Activated T-helper 1 cell treated with anti-CD3 and anti-CD28 coated beads, Interleukin-12 subunit alpha, Interleukin-12 subunit beta, Interleukin-2, Interleukin-4 antibody, amounts not matched to agents 30 ng/mL and 10 ng/mL and 1 ng/mL, durations not matched to agents 14 hours and 24 hours and 36 hours (primary cell): ENCODE measurements at regions of chr3 and their contacts with region 1.

Region 1: GRCh38 chr3:67654099-67654843 is at the start of gene SUCLG2:
- DNase-seq: peak; percentile 78
- H3K4me3 Mint-ChIP-seq: peak within 1 kb of the TSS; percentile 82
- H3K27ac Mint-ChIP-seq: peak within 1 kb of the TSS; percentile 85
- H3K4me1 Mint-ChIP-seq: peaks cover 59% of the 10 kb centered on the region
- H3K27me3 Mint-ChIP-seq: no peaks in the 10 kb centered on the region
- total RNA-seq, gene SUCLG2: 30.3 and 31.0 TPM in 2 replicates

Region 2: DNA sequence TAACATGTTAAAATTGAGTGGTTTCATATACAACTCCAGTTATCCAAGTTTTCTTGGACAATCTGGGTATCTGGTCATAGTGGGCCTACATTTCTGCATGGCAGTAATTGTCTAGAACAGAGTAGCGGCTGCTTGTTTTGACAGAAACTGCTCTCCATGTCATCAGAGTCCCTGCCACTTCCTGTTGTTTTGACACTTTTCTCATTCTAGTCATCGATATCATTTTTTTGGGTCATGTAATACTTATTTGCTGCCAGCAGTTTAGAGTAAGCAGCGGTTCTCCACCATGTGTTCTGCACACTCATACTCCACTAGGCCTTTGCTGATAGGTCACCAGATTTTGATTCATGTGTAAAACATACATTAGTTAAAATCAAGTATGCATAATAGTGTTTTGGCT is 1352.0 kb before region 1 on chr3:
- intact Hi-C with region 1: loop called (anchors 5 kb)
- DNase-seq: peak; percentile 37
- H3K4me3 Mint-ChIP-seq: peak overlapping the region; percentile 32
- H3K27ac Mint-ChIP-seq: peak overlapping the region; percentile 91
- H3K4me1 Mint-ChIP-seq: peaks cover 65% of the 10 kb centered on the region
- H3K27me3 Mint-ChIP-seq: no peaks in the 10 kb centered on the region

Region 3: DNA sequence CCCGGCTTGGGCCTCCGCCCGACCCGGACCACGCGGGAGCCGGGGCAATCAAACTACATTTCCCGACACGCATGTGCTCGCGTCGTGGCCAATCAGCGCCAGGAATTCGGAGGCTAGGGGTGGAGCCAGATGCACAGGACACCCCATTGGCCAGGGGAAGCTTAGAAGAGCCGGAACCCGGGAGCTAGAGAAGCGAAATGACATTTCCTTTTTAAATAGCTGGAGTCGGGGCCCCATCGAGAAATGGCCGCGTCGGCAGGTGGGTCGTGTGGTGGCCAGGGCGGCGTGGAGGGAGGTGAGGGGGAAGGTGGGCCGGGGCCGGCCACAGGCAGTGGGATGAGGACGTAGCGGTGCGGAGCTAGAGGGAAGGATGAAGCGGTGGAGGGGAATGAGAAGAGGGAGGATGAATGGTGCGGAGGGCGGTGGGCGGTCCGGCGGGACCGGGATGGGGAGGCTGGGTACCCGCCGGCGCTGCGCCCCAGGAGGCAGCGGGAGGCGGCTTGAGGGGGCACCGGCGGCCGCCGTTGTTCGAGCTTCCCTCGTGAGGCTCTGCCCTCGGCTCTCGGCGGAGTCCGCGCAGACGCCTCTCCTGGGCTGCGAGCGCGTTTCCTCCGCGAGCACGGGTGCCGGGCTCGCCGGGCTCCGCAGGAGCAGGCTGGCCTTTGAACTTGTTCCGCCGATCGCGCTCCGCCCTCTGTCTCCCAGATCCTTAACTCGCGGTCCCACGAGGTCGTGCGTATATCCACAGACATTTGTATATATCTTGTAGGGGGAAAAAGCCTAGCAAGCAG is 656.0 kb before region 1 on chr3 and contains the start of gene KBTBD8:
- intact Hi-C with region 1: loop called (anchors 1 kb)
- DNase-seq: peak; percentile 97
- H3K4me3 Mint-ChIP-seq: peak within 1 kb of the TSS; percentile 95
- H3K27ac Mint-ChIP-seq: peak within 1 kb of the TSS; percentile 88
- H3K4me1 Mint-ChIP-seq: peaks cover 36% of the 10 kb centered on the region
- H3K27me3 Mint-ChIP-seq: peaks cover 10% of the 10 kb centered on the region
- total RNA-seq, gene KBTBD8: 18.3 and 26.6 TPM in 2 replicates

Region 4: DNA sequence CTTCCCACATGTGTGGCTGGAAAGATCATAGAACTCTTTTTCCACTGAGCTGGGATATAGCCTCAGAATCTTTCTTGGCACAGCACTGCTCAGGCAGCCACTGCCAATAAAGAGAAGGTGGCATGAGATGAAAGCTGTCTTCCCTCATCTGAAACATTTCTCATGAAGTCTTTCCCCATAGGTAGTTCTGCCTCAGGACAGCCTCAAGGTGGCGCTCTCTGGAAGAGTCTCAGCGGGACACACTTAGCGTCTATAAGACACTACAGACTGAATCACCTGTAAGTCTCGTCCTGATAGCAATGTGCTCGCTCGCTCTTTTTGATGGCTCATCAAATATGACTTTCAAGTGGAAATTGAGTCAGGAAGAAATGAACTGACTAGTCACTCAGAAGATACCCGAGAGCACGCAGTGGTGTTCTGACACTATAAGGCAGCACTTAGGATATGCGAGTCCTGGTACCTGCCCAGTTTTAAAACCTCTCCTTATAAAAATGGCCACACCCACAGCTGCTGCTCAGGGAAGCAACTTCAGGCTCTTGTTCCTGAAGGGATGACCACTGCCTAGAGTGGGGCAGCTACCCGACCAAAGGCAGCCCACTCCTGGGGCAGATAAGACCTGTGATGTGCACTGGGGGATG is 269.4 kb before region 1 on chr3:
- intact Hi-C with region 1: loop called (anchors 2 kb)
- DNase-seq: no peak
- H3K4me3 Mint-ChIP-seq: no peak overlapping the region
- H3K27ac Mint-ChIP-seq: no peak overlapping the region
- H3K4me1 Mint-ChIP-seq: peaks cover 25% of the 10 kb centered on the region
- H3K27me3 Mint-ChIP-seq: no peaks in the 10 kb centered on the region

Region 5: DNA sequence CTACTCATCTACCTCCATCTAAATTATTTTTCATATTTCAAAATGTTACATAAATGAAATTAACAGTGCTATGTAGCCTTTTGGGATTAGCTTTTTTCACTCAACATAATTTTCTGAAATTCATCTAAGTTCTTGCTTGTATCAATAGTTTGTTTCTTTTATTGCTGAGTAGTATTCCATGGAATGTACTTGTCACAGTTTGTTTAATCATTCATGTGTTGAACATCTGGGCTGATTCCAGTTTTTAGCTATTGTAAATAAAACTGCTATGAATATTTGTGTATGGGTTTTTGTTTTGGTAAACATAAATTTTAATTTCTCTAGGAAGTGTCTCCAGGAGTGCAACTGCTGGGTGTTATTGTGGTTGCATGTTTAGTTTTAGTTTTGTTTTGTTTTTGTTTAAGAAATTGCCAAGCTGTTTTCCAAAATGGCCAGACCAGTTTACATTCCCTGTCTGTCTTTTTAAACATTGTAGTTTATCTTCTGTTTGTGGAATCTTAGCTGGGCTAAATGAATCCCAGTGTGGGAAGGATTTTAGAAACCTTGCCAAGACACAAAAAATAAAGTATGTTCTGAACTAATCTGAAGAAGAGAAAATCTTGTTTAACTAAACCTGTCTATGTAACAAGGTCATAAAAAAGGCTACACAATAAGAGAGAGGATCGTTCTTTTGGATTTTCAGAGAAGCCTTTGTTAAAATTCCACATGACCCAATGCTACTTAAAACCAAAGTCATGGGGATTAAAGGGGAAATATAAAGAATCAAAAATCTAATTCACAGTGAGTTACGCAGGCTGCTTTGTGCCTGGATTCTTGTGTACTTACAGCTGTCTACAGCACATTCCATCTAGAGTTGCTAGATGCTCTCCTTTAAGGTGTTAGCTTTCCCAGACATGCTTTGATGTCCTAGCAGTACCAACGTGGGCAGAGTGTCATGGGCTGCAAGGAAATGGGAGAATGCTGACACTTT is 129.3 kb after region 1 on chr3:
- intact Hi-C with region 1: no loop called
- DNase-seq: no peak
- H3K4me3 Mint-ChIP-seq: no peak overlapping the region
- H3K27ac Mint-ChIP-seq: no peak overlapping the region
- H3K4me1 Mint-ChIP-seq: no peaks in the 10 kb centered on the region
- H3K27me3 Mint-ChIP-seq: no peaks in the 10 kb centered on the region

Region 6: GRCh38 chr3:67998281-67998680 is 344.0 kb after region 1 on chr3:
- intact Hi-C with region 1: no loop called
- DNase-seq: no peak
- H3K4me3 Mint-ChIP-seq: no peak overlapping the region
- H3K27ac Mint-ChIP-seq: no peak overlapping the region
- H3K4me1 Mint-ChIP-seq: no peaks in the 10 kb centered on the region
- H3K27me3 Mint-ChIP-seq: no peaks in the 10 kb centered on the region

Region 7: DNA sequence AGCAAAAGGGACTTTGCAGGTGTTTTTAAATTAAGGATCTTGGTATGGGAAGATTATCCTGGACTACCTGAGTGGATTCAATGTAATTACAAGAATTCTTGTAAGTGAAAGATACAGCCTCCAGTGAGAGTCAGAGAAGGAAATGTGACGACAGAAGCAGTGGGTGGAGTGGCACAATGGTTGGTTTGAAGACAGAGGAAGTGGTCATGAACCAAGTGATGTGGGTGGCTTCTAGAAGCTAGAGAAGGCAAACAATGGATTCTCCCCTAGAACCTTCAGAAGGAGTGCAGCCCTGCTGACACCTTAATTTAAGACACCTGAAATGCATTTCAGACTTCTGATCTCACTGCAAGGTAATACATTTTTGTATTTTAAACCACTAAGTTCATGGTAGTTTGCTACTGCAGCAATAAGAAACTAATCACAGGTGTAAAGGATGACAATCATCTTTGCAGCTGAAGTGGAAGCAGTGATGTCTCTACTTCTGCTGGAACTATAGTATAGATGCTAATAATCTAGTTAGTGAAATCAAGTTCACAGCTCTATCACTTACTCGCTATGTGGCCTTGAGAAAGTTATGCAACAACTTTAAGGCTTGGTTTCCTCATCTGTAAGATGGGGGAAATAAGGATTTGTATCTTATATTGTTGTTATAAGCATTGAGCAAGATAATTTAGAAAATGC is 403.5 kb after region 1 on chr3:
- intact Hi-C with region 1: loop called (anchors 1 kb)
- DNase-seq: peak; percentile 66
- H3K4me3 Mint-ChIP-seq: peak overlapping the region; percentile 54
- H3K27ac Mint-ChIP-seq: peak overlapping the region; percentile 76
- H3K4me1 Mint-ChIP-seq: peaks cover 59% of the 10 kb centered on the region
- H3K27me3 Mint-ChIP-seq: no peaks in the 10 kb centered on the region

Region 8: DNA sequence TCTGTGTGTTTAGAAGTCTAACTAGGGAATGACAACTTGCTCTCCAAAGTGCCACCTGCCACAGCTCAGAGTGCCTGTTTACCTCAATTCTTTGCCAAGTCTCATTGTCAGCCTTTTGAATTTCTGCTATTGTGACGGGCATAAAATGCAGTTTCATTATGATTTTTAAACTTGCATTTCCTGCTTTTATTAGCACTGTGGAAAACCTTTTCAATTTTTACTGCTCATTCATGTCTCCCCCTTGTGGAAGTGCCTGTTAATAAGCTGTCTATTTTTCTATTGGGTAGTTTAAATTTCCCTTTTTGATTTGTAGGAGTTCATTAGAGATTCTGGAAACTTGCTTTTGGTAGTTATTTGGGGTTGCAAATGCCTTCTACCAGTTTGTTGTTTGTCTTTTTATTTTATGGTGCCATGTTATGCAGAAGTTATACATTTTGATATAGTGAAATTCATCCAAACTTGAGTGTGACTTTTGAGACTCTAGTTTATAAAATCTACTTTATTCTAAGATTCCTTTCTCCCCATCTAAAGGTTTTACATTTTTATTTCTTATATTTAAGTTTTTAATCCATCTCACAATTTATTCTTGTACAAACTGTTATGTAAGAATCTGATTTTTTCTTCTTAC is 1785.5 kb after region 1 on chr3:
- intact Hi-C with region 1: loop called (anchors 10 kb)
- DNase-seq: no peak
- H3K4me3 Mint-ChIP-seq: no peak overlapping the region
- H3K27ac Mint-ChIP-seq: no peak overlapping the region
- H3K4me1 Mint-ChIP-seq: peaks cover 78% of the 10 kb centered on the region
- H3K27me3 Mint-ChIP-seq: no peaks in the 10 kb centered on the region